CD8-positive, alpha-beta T cell (primary cell): ENCODE measurements at regions of chr14 and their contacts with region 1.

Region 1: DNA sequence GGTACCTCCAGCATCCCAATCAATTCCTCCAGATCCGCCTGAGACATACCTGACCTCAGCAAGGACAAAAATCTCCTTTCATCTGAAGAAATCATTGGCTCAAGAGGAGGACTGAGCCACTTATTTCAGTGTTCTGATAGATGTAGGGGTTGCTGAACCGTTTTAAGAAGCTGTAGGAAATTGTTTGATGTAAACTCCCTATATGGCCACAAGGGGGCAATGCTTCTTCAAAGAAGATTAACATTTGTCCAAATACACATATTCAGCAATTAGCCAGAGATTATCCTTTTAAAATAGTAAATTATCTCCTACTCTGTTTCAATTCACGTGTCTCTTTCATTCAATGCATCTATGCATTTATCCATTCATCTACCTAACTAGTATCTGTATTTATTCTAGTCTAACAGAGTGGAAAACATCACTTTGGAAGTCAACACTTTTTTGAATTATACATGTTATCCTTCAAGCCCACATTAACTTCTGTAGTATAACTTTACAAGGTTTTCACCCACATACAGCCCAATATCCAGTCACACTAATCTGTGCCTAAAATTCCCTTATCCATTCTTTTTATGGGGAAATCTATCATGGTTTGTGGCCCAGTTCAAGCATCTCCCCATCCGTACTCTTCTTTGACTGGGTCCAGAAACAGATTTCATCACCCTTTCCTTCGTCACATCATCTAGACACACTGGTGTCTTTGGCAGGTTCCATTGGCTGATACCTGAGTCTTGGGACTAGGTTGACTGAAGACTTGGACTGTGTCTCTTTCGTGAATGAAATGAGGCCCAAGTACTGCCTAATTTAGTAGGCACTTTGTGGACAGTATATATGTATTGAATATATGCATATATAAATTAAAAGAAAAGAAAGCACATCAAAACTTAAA is 411.0 kb upstream of the OR4E1 start:
- DNase-seq: peak in 3 of 9 experiments; percentile 20 to 74 (median 58)
- ATAC-seq: peak; percentile 65
- H3K4me3 ChIP-seq: no peak overlapping the region
- H3K4me3 Mint-ChIP-seq: peak overlapping the region; percentile 32
- H3K27ac ChIP-seq: no peak overlapping the region
- H3K27ac Mint-ChIP-seq: peak overlapping the region; percentile 76
- H3K4me1 ChIP-seq: no peaks in the 10 kb centered on the region
- H3K4me1 Mint-ChIP-seq: peaks cover 33% of the 10 kb centered on the region
- H3K27me3 ChIP-seq: no peaks in the 10 kb centered on the region
- H3K27me3 Mint-ChIP-seq: no peaks in the 10 kb centered on the region
- CTCF ChIP-seq: peak; percentile 54

Region 2: DNA sequence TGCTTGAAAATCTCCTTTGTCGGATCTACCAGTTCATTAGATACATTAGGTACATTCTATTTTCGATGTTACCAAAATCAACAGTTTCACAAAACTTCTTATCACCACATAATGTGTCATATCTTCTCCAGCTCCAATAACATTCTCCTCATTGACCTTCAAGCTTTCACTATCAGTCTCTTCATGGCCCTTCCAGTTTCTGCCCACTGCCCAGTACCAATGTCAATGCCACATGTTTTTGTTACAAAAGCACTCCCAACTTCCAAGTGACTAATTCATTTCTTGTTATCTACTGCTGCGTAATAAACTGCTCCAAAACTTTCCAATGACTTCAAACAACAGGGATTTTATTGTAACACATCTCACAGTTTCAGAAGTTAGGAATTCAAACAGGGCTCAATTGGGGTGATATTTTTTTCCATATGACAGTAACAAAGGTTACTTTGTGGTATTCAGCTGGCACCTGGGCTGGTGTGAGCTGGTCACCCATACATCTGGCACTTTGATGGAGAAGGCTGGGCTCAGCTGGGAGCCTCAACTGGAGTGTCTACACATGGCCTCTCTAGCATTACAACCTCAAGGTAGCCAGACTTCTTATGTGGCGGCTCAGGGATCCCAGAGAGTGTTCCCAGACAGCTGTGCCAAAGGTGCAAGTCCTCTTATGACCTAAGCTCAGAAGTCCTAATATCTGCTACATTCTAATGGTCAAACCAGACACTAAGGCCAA is 934.8 kb before region 1 on chr14:
- CTCF ChIA-PET with region 1: no interaction called
- POLR2A ChIA-PET with region 1: no interaction called
- intact Hi-C with region 1: no loop called
- DNase-seq: no peak
- ATAC-seq: no peak
- H3K4me3 ChIP-seq: no peak overlapping the region
- H3K4me3 Mint-ChIP-seq: no peak overlapping the region
- H3K27ac ChIP-seq: no peak overlapping the region
- H3K27ac Mint-ChIP-seq: no peak overlapping the region
- H3K4me1 ChIP-seq: no peaks in the 10 kb centered on the region
- H3K4me1 Mint-ChIP-seq: no peaks in the 10 kb centered on the region
- H3K27me3 ChIP-seq: peaks cover 0 to 4% of the 10 kb centered on the region in 2 experiments
- H3K27me3 Mint-ChIP-seq: peaks cover 2% of the 10 kb centered on the region
- CTCF ChIP-seq: no peak

Region 3: DNA sequence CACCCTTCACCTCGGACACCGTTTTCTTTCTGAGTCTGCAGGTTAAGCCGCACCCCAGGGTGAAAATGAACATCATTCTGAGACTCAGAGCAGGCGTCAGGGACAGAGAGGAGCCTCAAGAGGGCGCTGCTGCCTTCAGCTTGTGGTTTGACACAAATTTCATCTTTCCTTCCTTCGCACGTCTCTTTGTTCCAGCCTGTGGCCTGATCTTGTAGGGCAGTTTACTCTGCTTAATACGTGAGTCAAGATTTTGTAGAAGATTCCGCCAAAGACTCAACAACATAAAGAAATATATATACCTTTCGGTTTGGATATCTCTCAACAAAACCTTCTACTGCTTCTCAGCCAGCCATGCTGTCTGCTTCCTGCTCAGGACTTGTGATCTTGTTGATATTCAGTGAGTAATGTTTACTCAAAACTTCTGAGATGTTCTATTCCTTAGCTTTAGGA is 81.8 kb before region 1 on chr14:
- CTCF ChIA-PET with region 1: no interaction called
- POLR2A ChIA-PET with region 1: no interaction called
- intact Hi-C with region 1: no loop called
- DNase-seq: peak; percentile 39 to 84 (median 70)
- ATAC-seq: peak; percentile 76
- H3K4me3 ChIP-seq: peak overlapping the region; percentile 17 to 28
- H3K4me3 Mint-ChIP-seq: peak overlapping the region; percentile 67
- H3K27ac ChIP-seq: peak overlapping the region; percentile 50 to 67
- H3K27ac Mint-ChIP-seq: peak overlapping the region; percentile 93
- H3K4me1 ChIP-seq: peaks cover 20% of the 10 kb centered on the region
- H3K4me1 Mint-ChIP-seq: peaks cover 28% of the 10 kb centered on the region
- H3K27me3 ChIP-seq: no peaks in the 10 kb centered on the region
- H3K27me3 Mint-ChIP-seq: no peaks in the 10 kb centered on the region
- CTCF ChIP-seq: peak; percentile 32

Region 4: DNA sequence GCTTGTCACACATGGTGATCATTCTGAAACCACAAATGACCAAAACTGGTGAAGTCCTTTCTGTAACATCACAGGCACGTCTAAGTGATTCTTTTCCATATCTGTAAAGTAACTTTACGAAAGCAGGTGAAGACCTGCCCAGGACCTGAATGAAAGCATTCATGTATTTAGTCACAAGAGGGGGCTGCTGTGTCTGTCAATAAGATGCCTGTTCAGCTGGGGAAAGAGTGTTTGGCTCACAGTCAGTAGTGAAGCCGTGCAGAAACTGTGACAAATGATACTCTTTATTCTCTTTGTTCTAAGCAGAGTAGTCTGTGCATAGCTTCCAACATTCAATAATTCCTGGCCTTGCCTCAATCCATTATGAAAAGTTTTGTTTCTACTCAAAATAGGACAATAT is 37.5 kb before region 1 on chr14:
- CTCF ChIA-PET with region 1: interaction called, 13 read pairs
- POLR2A ChIA-PET with region 1: no interaction called
- intact Hi-C with region 1: loop called (anchors 1 to 5 kb)
- DNase-seq: peak in 5 of 9 experiments; percentile 19 to 77 (median 38)
- ATAC-seq: peak; percentile 90
- H3K4me3 ChIP-seq: no peak overlapping the region
- H3K4me3 Mint-ChIP-seq: peak overlapping the region; percentile 58
- H3K27ac ChIP-seq: peak overlapping the region; percentile 15 to 19
- H3K27ac Mint-ChIP-seq: peak overlapping the region; percentile 92
- H3K4me1 ChIP-seq: peaks cover 14% of the 10 kb centered on the region
- H3K4me1 Mint-ChIP-seq: peaks cover 44% of the 10 kb centered on the region
- H3K27me3 ChIP-seq: no peaks in the 10 kb centered on the region
- H3K27me3 Mint-ChIP-seq: no peaks in the 10 kb centered on the region
- CTCF ChIP-seq: peak; percentile 35

Region 5: DNA sequence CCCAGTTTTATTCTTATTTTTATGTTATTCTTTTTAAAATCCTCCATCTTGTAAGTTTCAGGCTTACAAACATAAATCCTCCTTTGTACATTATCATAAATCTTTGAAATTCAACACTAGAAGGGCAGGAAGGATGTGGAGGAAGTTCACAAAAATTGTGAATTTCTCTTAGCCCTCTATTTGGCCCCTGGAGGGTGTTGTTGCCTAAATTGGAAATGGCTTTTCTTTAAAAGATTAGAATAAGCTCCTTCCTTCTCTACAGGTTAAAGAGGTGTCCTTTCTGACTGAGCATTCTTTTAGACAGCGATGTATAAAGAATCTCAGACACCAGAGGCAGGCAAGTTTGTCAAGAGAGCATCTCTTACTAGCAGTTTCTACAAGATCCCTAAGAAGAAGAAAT is 19.3 kb before region 1 on chr14:
- CTCF ChIA-PET with region 1: interaction called, 15 read pairs
- POLR2A ChIA-PET with region 1: interaction called, 4 read pairs
- intact Hi-C with region 1: loop called in 1 of 2 experiments (anchors 1 kb)
- DNase-seq: peak in 1 of 9 experiments; percentile 26
- ATAC-seq: peak; percentile 26
- H3K4me3 ChIP-seq: no peak overlapping the region
- H3K4me3 Mint-ChIP-seq: peak overlapping the region; percentile 36
- H3K27ac ChIP-seq: no peak overlapping the region
- H3K27ac Mint-ChIP-seq: peak overlapping the region; percentile 37
- H3K4me1 ChIP-seq: peaks cover 18% of the 10 kb centered on the region
- H3K4me1 Mint-ChIP-seq: peaks cover 31% of the 10 kb centered on the region
- H3K27me3 ChIP-seq: no peaks in the 10 kb centered on the region
- H3K27me3 Mint-ChIP-seq: no peaks in the 10 kb centered on the region
- CTCF ChIP-seq: no peak

Region 6: DNA sequence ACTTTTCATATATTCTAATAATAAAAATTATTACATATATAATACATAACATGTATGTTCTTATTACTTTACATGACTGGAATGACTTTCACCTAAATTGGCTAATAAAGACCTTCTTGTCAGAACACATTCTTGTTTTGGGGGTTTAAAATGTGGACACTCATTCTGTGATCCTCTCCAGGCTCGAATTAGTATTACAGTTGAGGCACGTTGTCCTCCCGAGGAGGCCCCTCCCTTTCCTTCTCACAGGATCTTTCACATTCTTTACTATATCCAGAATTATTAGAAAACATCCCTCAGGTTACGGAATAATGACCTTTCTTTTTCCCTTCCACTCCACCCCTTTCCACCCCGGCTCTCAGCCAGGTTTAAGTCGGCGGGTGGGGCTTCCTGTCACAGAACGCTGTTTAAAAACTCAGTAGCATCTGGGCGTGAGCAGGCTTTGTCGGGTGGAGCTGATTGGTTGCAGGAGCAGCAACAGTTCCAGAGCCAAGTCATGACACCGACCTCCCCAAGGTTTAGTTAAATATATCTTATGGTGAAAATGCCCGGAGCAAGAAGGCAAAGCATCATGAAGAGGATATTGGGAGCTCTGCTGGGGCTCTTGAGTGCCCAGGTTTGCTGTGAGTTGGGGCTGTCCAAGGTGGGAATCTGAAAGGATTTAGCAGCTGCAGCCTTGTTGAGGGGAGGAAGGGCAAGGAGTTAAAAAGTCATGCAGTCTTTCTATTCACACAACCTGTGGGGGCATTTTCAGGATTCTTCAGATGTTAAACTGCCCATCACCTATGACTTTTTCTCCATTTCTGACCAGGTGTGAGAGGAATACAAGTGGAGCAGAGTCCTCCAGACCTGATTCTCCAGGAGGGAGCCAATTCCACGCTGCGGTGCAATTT is 14.3 kb before region 1 on chr14:
- CTCF ChIA-PET with region 1: interaction called, 15 read pairs
- POLR2A ChIA-PET with region 1: interaction called, 4 read pairs
- intact Hi-C with region 1: loop called in 1 of 2 experiments (anchors 1 kb)
- DNase-seq: peak in 8 of 9 experiments; percentile 24 to 77 (median 60)
- ATAC-seq: peak; percentile 78
- H3K4me3 ChIP-seq: peak overlapping the region; percentile 49 to 69
- H3K4me3 Mint-ChIP-seq: peak overlapping the region; percentile 90
- H3K27ac ChIP-seq: peak overlapping the region; percentile 44 to 57
- H3K27ac Mint-ChIP-seq: peak overlapping the region; percentile 94
- H3K4me1 ChIP-seq: peaks cover 26% of the 10 kb centered on the region
- H3K4me1 Mint-ChIP-seq: peaks cover 51% of the 10 kb centered on the region
- H3K27me3 ChIP-seq: no peaks in the 10 kb centered on the region
- H3K27me3 Mint-ChIP-seq: no peaks in the 10 kb centered on the region
- CTCF ChIP-seq: no peak